Sigmoid colon (tissue), 7 donors: ENCODE measurements at regions of chr13 and their contacts with region 1.

Region 1: DNA sequence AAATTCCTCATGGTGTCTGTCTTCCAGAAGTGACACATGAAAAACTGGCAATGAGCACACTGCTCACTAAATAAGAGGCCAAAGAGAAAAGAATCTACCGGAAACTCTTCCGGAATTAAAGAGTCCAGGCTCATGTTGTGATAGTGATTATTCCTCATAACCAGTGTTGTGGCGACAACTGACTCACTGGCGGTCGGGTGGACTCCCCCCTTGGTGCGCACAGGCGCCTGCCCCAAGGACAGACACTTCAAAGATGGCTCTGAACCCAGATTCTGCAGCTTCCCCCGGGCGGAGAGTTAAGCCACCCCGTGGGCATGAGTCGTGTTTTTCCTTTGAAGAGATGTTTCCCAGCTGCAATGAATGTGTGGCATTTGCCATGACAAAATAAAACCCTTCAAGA is 10.3 kb downstream of the IL17D start:
- DNase-seq: no peak
- H3K4me3 ChIP-seq: no peak overlapping the region
- H3K27ac ChIP-seq: peak overlapping the region; percentile 66 to 75 (median 70)
- H3K4me1 ChIP-seq: peaks cover 0 to 21% (median 15%) of the 10 kb centered on the region in 4 donors
- H3K27me3 ChIP-seq: peaks cover 0 to 3% (median 0%) of the 10 kb centered on the region in 3 donors
- CTCF ChIP-seq: no peak
- EP300 ChIP-seq: no peak
- POLR2A ChIP-seq: no peak

Region 2: DNA sequence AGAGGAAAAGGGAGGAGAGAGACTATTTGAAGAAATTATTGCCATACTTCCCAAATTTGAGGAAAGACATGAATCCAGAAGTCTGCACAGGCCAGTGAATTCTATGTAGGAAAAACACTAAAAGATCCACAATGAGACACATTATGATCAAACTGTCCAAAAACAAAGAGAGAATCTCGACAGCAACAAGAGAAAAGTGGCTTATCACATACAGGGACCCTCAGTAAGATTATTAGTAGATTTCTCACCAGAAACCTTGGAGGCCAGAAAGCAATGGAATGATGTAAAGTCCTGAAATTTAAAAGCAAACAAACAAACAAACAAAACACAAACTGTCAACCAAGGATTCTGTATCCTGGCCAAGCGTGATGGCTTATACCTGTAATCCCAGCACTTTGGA is 66.0 kb before region 1 on chr13:
- intact Hi-C with region 1: no loop called
- DNase-seq: no peak
- H3K4me3 ChIP-seq: no peak overlapping the region
- H3K27ac ChIP-seq: no peak overlapping the region
- H3K4me1 ChIP-seq: no peaks in the 10 kb centered on the region
- H3K27me3 ChIP-seq: no peaks in the 10 kb centered on the region
- CTCF ChIP-seq: no peak
- EP300 ChIP-seq: no peak
- POLR2A ChIP-seq: no peak

Region 3: GRCh38 chr13:20773194-20774080 is 59.7 kb after region 1 on chr13 and contains the start of gene EEF1AKMT1:
- intact Hi-C with region 1: loop called (anchors 5 kb)
- DNase-seq: peak; percentile 97
- H3K4me3 ChIP-seq: peak within 1 kb of the TSS; percentile 51 to 63 (median 60)
- H3K27ac ChIP-seq: peak within 1 kb of the TSS; percentile 81 to 95 (median 85)
- H3K4me1 ChIP-seq: peaks cover 0 to 15% (median 9%) of the 10 kb centered on the region in 4 donors
- H3K27me3 ChIP-seq: no peaks in the 10 kb centered on the region
- CTCF ChIP-seq: no peak
- EP300 ChIP-seq: no peak
- POLR2A ChIP-seq: peak; percentile 89 to 92
- total RNA-seq, gene EEF1AKMT1: 10.0 to 17.8 (median 12.1) TPM

Region 4: GRCh38 chr13:20828539-20829364 is 115.0 kb after region 1 on chr13:
- intact Hi-C with region 1: loop called (anchors 2 kb)
- DNase-seq: no peak
- H3K4me3 ChIP-seq: peak overlapping the region in 3 of 4 donors; percentile 16 to 30 (median 23)
- H3K27ac ChIP-seq: peak overlapping the region; percentile 44 to 55 (median 47)
- H3K4me1 ChIP-seq: peaks cover 0 to 65% (median 35%) of the 10 kb centered on the region in 4 donors
- H3K27me3 ChIP-seq: no peaks in the 10 kb centered on the region
- CTCF ChIP-seq: peak; percentile 49 to 82 (median 79)
- EP300 ChIP-seq: no peak
- POLR2A ChIP-seq: no peak

Region 5: GRCh38 chr13:20869542-20869941 is 155.8 kb after region 1 on chr13:
- intact Hi-C with region 1: loop called (anchors 5 kb)
- DNase-seq: no peak
- H3K4me3 ChIP-seq: no peak overlapping the region
- H3K27ac ChIP-seq: no peak overlapping the region
- H3K4me1 ChIP-seq: peaks cover 0 to 26% (median 24%) of the 10 kb centered on the region in 4 donors
- H3K27me3 ChIP-seq: no peaks in the 10 kb centered on the region
- CTCF ChIP-seq: no peak
- EP300 ChIP-seq: no peak
- POLR2A ChIP-seq: no peak

Region 6: DNA sequence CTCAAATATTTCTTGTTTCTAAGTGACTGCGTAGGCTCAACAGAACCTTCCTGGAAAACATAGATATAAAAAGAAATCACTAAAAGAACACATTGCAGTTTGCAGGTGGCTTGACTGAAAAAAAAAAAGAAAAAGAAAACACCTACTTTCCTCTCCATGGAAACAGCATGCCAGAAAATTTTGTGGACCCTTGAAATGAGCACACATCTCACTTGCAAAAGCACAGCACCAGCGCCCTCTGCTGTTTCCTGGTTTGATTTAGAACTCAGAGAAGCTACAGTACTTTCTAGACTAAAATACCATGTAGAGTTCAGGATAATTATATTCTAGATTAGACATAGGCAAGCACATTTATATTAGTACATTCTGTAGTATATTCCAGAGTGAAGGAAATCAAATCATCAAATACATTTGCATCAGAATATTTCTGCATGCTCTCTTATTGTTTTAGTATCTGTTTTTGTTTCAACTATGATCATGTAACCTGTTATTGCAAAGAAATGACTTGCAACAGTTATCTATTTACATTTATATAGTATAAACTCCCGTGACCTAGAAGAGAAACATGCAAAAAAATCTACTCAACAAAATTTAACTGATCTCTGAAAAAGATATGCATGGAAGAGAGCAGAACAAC is 211.1 kb after region 1 on chr13:
- intact Hi-C with region 1: loop called (anchors 2 kb)
- DNase-seq: peak; percentile 86
- H3K4me3 ChIP-seq: no peak overlapping the region
- H3K27ac ChIP-seq: no peak overlapping the region
- H3K4me1 ChIP-seq: no peaks in the 10 kb centered on the region
- H3K27me3 ChIP-seq: no peaks in the 10 kb centered on the region
- CTCF ChIP-seq: peak; percentile 44 to 64 (median 51)
- EP300 ChIP-seq: no peak
- POLR2A ChIP-seq: no peak

Region 7: GRCh38 chr13:20960663-20961309 is 247.0 kb after region 1 on chr13:
- intact Hi-C with region 1: no loop called
- DNase-seq: no peak
- H3K4me3 ChIP-seq: no peak overlapping the region
- H3K27ac ChIP-seq: no peak overlapping the region
- H3K4me1 ChIP-seq: no peaks in the 10 kb centered on the region
- H3K27me3 ChIP-seq: no peaks in the 10 kb centered on the region
- CTCF ChIP-seq: no peak
- EP300 ChIP-seq: no peak
- POLR2A ChIP-seq: no peak